ENCODE measurements at regions of chr20 and their contacts with region 1.

Region 1: DNA sequence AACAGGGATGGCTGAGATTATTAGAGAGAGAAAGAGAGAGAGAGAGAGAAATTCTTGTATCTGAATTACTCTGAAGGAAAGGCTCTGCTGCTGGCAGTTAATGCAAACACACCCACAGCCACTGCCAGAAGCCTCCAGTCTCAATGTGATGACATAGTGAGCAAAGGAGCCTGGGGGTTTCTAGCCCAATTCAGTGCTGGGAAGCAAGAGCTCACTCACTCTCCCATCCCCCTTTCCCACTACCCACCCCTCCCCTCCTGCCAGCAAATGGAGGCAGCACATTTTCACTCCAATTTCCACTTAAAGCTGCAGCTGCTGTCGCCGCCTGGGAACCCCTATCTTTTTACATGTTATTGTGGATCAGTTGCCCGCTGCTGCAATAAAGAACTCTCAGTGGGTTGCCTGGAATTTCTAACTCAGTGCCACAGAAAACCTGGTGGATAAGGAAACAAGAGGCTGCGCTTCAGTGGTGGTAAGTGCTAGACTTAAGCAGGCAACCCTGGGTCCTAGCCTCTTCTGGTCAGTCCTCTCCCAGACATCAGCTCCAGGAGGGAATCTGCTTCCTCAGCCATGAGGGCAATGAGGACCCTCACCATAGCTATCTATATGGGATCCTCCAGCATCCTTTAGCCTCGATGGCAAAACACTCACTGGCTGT is 490.5 kb upstream of the SULF2 start:
- DNase-seq: no peak
- H3K4me3 ChIP-seq: no peak overlapping the region
- H3K27ac ChIP-seq: no peak overlapping the region
- H3K4me1 ChIP-seq: no peaks in the 10 kb centered on the region
- H3K27me3 ChIP-seq: no peaks in the 10 kb centered on the region
- CTCF ChIP-seq: no peak
- EP300 ChIP-seq: no peak
- POLR2A ChIP-seq: no peak

Region 2: GRCh38 chr20:48398506-48399505 is 123.0 kb after region 1 on chr20:
- in situ Hi-C with region 1: no loop called
- intact Hi-C with region 1: no loop called
- DNase-seq: no peak
- H3K4me3 ChIP-seq: no peak overlapping the region
- H3K27ac ChIP-seq: no peak overlapping the region
- H3K4me1 ChIP-seq: no peaks in the 10 kb centered on the region
- H3K27me3 ChIP-seq: peaks cover 6% of the 10 kb centered on the region
- CTCF ChIP-seq: no peak
- EP300 ChIP-seq: no peak
- POLR2A ChIP-seq: no peak

Region 3: GRCh38 chr20:49603209-49603627 is 1327.4 kb after region 1 on chr20:
- in situ Hi-C with region 1: no loop called
- intact Hi-C with region 1: loop called (anchors 5 kb)
- DNase-seq: no peak
- H3K4me3 ChIP-seq: no peak overlapping the region
- H3K27ac ChIP-seq: peak overlapping the region in 1 of 4 donors; percentile 17
- H3K4me1 ChIP-seq: no peaks in the 10 kb centered on the region
- H3K27me3 ChIP-seq: no peaks in the 10 kb centered on the region
- CTCF ChIP-seq: peak in 1 of 5 experiments; percentile 14
- EP300 ChIP-seq: no peak
- POLR2A ChIP-seq: no peak

Measured in transverse colon (tissue), 4 donors.